CD14-positive monocyte (primary cell): ENCODE measurements at regions of chr4 and their contacts with region 1.

Region 1: GRCh38 chr4:150708004-150708403 is 126.1 kb downstream of the MAB21L2 start:
- DNase-seq: no peak
- H3K4me3 ChIP-seq: no peak overlapping the region
- H3K4me3 Mint-ChIP-seq: no peak overlapping the region
- H3K27ac ChIP-seq: no peak overlapping the region
- H3K27ac Mint-ChIP-seq: no peak overlapping the region
- H3K4me1 ChIP-seq: no peaks in the 10 kb centered on the region
- H3K4me1 Mint-ChIP-seq: no peaks in the 10 kb centered on the region
- H3K27me3 ChIP-seq: no peaks in the 10 kb centered on the region
- H3K27me3 Mint-ChIP-seq: no peaks in the 10 kb centered on the region
- CTCF ChIP-seq: no peak

Region 2: GRCh38 chr4:150656891-150657290 is 51.1 kb before region 1 on chr4:
- intact Hi-C with region 1: no loop called
- DNase-seq: peak; percentile 4 to 19 (median 7)
- H3K4me3 ChIP-seq: no peak overlapping the region
- H3K4me3 Mint-ChIP-seq: no peak overlapping the region
- H3K27ac ChIP-seq: no peak overlapping the region
- H3K27ac Mint-ChIP-seq: no peak overlapping the region
- H3K4me1 ChIP-seq: no peaks in the 10 kb centered on the region
- H3K4me1 Mint-ChIP-seq: peaks cover 3% of the 10 kb centered on the region
- H3K27me3 ChIP-seq: no peaks in the 10 kb centered on the region
- H3K27me3 Mint-ChIP-seq: no peaks in the 10 kb centered on the region
- CTCF ChIP-seq: no peak

Region 3: GRCh38 chr4:150769235-150769634 is 61.2 kb after region 1 on chr4:
- intact Hi-C with region 1: no loop called
- DNase-seq: peak; percentile 6 to 20 (median 9)
- H3K4me3 ChIP-seq: no peak overlapping the region
- H3K4me3 Mint-ChIP-seq: no peak overlapping the region
- H3K27ac ChIP-seq: peak overlapping the region in 1 of 2 donors; percentile 9
- H3K27ac Mint-ChIP-seq: peak overlapping the region in 4 of 7 donors; percentile 11 to 69 (median 48)
- H3K4me1 ChIP-seq: no peaks in the 10 kb centered on the region
- H3K4me1 Mint-ChIP-seq: peaks cover 10% of the 10 kb centered on the region
- H3K27me3 ChIP-seq: no peaks in the 10 kb centered on the region
- H3K27me3 Mint-ChIP-seq: no peaks in the 10 kb centered on the region
- CTCF ChIP-seq: no peak

Region 4: DNA sequence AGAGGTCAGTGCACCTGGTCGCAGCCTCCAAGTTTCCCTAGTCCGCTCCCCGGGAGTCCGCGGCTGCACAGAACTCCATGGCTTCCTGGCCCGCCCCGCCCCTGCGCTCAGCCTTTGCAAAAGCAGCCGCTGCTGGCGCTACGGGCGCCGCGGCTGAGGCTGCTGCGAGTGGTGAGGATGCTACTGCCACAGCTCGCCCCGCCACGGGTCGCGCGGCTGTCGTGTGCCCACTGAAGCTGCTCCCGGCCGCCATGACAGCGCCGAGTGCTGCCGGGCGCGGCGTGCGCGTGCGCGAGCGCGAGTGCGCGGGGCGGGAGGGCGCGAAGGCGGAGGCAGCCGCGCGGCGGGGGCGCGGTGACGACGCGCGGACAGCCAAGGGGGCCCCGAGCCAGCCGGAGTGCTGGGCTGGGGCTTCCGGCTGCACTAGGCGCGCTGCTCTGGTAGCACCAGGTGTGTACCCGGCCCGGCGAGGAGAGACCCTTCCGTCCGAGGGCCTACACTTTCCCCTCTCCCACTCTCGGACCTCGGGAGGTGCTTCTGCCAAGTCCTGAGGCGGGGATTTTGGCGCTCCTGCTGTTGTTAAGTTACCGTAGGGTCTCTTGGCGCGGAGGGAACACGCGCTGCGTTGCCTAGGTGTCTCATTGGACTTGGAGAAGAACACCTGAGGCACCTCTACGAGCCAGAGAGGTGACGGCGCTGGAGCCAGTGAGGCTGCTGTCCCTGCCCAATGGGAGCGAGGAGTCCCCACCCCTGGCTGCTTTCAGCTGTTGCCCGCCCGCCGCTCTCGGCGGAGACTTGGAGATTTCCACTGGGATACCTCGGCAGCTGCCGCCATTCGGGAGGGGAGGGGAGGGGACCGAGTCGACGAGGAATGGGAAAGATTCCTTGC is 307.7 kb after region 1 on chr4:
- intact Hi-C with region 1: loop called in 1 of 2 experiments (anchors 5 kb)
- DNase-seq: peak; percentile 38 to 55 (median 52)
- H3K4me3 ChIP-seq: peak overlapping the region; percentile 82 to 98 (median 88)
- H3K4me3 Mint-ChIP-seq: peak overlapping the region; percentile 100
- H3K27ac ChIP-seq: peak overlapping the region; percentile 29 to 82
- H3K27ac Mint-ChIP-seq: peak overlapping the region in 5 of 7 donors; percentile 80 to 95 (median 92)
- H3K4me1 ChIP-seq: peaks cover 28 to 35% of the 10 kb centered on the region in 2 donors
- H3K4me1 Mint-ChIP-seq: peaks cover 30% of the 10 kb centered on the region
- H3K27me3 ChIP-seq: no peaks in the 10 kb centered on the region
- H3K27me3 Mint-ChIP-seq: peaks cover 0 to 9% (median 3%) of the 10 kb centered on the region in 3 donors
- CTCF ChIP-seq: no peak